Dendritic cell treated with granulocyte-macrophage colony-stimulating factor and Interleukin-4, amounts not matched to agents 40 ng/mL and 50 ng/mL, for 4 days (primary cell): ENCODE measurements at regions of chr11 and their contacts with region 1.

Region 1: GRCh38 chr11:63635762-63636465 is 21.7 kb upstream of the PLAAT3 start:
- H3K4me3 Mint-ChIP-seq: no peak overlapping the region
- H3K27ac Mint-ChIP-seq: no peak overlapping the region
- H3K4me1 Mint-ChIP-seq: peaks cover 42% of the 10 kb centered on the region
- H3K27me3 Mint-ChIP-seq: no peaks in the 10 kb centered on the region

Region 2: GRCh38 chr11:63032457-63032856 is 603.5 kb before region 1 on chr11:
- intact Hi-C with region 1: loop called (anchors 10 kb)
- H3K4me3 Mint-ChIP-seq: no peak overlapping the region
- H3K27ac Mint-ChIP-seq: no peak overlapping the region
- H3K4me1 Mint-ChIP-seq: peaks cover 5% of the 10 kb centered on the region
- H3K27me3 Mint-ChIP-seq: peaks cover 34% of the 10 kb centered on the region

Region 3: DNA sequence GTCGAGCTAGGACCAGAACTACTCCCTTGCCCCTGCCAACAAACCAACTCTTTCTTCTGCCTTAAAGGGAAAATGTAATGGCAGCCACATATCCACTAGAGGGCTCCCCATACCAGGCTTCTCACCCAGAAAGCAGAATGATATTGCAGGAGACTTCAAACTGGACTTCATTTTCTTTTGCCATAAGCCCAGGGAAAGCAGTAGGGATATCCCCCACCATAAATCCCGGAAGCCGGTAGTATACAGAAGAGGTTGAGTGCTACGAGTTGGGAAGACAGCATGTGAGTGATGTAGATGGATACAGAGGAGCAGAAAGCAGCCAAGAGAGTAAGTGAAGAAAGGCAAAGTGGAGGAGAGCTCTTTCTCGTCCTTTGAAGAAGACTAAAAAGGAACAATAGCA is 157.0 kb before region 1 on chr11:
- intact Hi-C with region 1: loop called (anchors 1 kb)
- H3K4me3 Mint-ChIP-seq: no peak overlapping the region
- H3K27ac Mint-ChIP-seq: no peak overlapping the region
- H3K4me1 Mint-ChIP-seq: no peaks in the 10 kb centered on the region
- H3K27me3 Mint-ChIP-seq: peaks cover 17% of the 10 kb centered on the region

Region 4: DNA sequence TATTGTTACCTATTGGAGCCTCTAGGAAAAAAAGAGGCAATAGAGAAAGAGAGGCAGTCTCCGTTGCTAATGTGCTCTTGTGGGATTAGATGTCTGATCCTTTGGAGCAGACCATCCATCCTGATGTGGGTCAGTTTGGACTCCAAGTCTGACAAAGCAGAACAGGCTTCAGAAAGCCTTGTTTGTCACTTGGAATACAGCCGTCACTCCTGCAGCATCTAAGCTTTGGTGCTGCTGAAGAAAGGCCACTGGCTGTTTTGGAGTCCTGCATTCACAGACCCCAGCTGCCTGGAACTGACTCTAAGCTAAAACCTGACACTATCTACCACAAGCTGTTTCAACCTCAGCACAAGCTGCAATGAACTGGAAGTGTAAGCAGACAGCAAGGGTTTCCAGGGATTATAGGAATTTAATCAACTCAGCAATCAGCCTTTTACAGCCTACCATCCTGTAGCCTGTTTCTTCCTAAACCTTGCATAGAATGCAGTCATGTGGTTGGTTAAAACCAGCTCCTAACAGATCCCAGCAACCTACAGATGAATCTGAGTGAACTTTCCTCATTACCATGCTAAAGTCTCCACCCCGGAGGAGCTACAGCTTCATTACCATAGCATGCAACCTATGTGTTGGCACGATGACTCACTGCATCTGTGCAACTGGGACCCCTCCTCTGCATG is 103.0 kb before region 1 on chr11:
- intact Hi-C with region 1: no loop called
- H3K4me3 Mint-ChIP-seq: no peak overlapping the region
- H3K27ac Mint-ChIP-seq: no peak overlapping the region
- H3K4me1 Mint-ChIP-seq: peaks cover 29% of the 10 kb centered on the region
- H3K27me3 Mint-ChIP-seq: peaks cover 26% of the 10 kb centered on the region

Region 5: DNA sequence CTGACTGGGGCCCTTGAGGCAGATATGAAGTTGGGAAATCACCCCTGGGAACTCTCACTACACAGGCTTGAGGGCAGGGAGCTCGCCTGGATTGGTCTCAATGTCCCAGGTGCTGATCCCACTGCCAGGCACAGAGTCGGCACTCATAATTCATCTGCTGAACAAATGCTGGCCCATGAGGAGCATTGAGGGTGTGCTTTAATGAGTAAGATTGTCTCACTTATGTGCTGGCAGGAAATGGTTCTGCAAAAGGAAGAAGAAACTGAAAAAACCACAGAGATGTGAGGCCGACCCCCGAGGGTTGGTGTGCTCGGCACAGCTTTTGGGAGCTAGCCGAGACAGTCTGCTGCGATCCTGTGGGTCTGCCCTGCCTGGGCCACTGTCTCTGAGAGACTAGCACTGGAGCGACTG is 82.2 kb before region 1 on chr11:
- intact Hi-C with region 1: no loop called
- H3K4me3 Mint-ChIP-seq: no peak overlapping the region
- H3K27ac Mint-ChIP-seq: no peak overlapping the region
- H3K4me1 Mint-ChIP-seq: peaks cover 27% of the 10 kb centered on the region
- H3K27me3 Mint-ChIP-seq: peaks cover 42% of the 10 kb centered on the region

Region 6: DNA sequence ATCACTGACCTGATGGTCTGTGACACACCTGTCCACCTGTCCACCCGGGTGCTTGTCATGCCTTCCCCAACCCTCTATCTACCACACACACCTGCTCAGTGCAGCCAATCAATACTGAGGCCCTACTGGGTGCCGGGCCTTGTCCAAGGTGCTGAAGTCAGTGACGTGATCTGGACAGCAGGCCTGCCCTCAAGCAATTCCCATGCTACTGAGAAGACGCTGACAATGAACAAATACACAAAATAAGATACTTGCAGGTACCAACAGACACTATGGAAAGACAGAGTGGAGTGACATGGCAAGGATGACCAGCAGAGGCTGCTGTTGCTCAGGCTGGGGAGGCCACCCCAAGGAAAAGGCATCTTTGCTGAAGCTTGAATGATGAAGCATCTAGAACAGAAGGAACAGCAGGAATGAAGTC is 42.9 kb before region 1 on chr11:
- intact Hi-C with region 1: loop called (anchors 1 kb)
- H3K4me3 Mint-ChIP-seq: no peak overlapping the region
- H3K27ac Mint-ChIP-seq: no peak overlapping the region
- H3K4me1 Mint-ChIP-seq: peaks cover 22% of the 10 kb centered on the region
- H3K27me3 Mint-ChIP-seq: peaks cover 18% of the 10 kb centered on the region

Region 7: GRCh38 chr11:63671322-63672155 is 35.6 kb after region 1 on chr11 and contains the start of gene ATL3:
- intact Hi-C with region 1: loop called (anchors 1 kb)
- H3K4me3 Mint-ChIP-seq: peak within 1 kb of the TSS; percentile 80
- H3K27ac Mint-ChIP-seq: peak within 1 kb of the TSS; percentile 82
- H3K4me1 Mint-ChIP-seq: peaks cover 40% of the 10 kb centered on the region
- H3K27me3 Mint-ChIP-seq: no peaks in the 10 kb centered on the region

Region 8: GRCh38 chr11:63738720-63739360 is 102.9 kb after region 1 on chr11:
- intact Hi-C with region 1: loop called (anchors 2 kb)
- H3K4me3 Mint-ChIP-seq: no peak overlapping the region
- H3K27ac Mint-ChIP-seq: no peak overlapping the region
- H3K4me1 Mint-ChIP-seq: peaks cover 20% of the 10 kb centered on the region
- H3K27me3 Mint-ChIP-seq: no peaks in the 10 kb centered on the region

Region 9: DNA sequence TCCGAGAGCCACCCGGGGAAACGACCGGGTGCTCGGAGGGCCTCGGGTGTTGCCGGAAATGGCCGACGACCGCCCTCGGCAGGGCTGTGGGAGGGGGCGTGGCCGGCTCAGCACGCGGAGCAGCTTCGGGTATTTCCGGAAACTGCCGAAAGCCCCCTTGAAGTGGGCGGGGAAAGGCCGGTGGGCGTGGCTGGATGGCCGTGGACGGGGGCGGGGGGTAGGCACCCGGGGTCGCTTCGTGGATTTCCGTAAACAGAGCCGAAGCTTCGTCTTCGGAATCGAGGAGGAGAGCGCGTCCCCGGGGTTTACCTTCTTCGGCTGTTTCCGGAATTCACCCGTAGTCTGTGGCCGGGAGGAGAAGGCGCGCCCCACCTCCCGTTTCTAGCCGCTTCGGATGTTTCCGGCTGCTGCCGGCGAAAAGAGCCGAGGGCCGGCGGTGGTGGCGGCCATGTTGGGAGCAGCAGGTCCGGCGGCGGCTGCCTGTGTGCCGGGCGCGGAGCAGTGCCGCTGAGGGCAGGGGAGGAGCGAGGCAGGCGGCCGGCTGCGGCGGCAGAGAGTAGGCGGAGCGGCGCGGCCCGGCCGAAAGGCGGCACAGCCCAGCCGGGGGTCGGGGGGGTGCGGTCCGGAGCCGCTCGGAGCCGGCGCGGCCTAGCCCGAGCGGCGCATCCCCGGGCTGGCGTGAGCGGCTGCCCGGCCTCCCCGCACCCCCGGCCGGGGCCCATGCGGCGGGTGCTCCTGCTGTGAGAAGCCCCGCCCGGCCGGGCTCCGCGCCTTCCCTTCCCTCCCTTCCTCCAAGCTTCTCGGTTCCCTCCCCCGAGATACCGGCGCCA is 203.0 kb after region 1 on chr11 and contains the start of gene MARK2:
- intact Hi-C with region 1: no loop called
- H3K4me3 Mint-ChIP-seq: peak within 1 kb of the TSS; percentile 86
- H3K27ac Mint-ChIP-seq: peak within 1 kb of the TSS; percentile 92
- H3K4me1 Mint-ChIP-seq: peaks cover 60% of the 10 kb centered on the region
- H3K27me3 Mint-ChIP-seq: no peaks in the 10 kb centered on the region